SK-N-SH (cell line): ENCODE measurements at regions of chr17 and their contacts with region 1.

Region 1: DNA sequence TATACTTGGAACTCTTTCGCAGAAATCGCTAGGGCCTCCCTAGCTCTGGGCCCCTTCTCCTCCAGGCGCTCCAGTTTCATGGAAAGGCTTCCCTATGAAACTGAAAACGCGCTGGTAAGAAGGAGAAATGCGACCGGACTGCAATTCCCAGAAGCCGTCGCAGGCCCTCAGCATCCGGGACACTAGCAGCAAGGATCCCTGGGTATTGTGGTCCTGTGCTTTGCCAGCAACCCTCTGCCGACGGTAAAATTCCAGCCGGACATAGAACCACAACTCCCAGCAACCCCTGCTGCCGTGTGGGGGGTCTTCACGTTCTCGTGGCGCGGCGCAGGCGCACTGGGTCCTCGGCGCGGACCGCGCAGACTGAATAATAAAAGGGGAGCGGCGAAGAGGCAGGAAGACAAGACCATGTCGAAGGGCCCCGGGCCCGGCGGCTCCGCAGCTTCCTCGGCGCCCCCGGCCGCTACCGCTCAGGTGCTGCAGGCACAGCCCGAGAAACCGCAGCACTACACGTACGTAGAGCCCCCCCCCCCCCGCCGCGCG is at the start of gene UNK:
- DNase-seq: peak; percentile 99
- H3K4me3 ChIP-seq: peak within 1 kb of the TSS; percentile 65 to 72
- H3K27ac ChIP-seq: peak within 1 kb of the TSS; percentile 98
- H3K4me1 ChIP-seq: peaks cover 16 to 20% of the 10 kb centered on the region in 2 experiments
- H3K27me3 ChIP-seq: no peaks in the 10 kb centered on the region
- CTCF ChIP-seq: no peak
- EP300 ChIP-seq: no peak
- RAD21 ChIP-seq: no peak
- polyA plus RNA-seq, gene UNK: 19.9 and 24.8 TPM in 2 replicates

Region 2: GRCh38 chr17:75799398-75799797 is 14.9 kb after region 1 on chr17:
- CTCF ChIA-PET with region 1: interaction called, 19 read pairs
- POLR2A ChIA-PET with region 1: interaction called, 11 read pairs
- DNase-seq: no peak
- H3K4me3 ChIP-seq: no peak overlapping the region
- H3K27ac ChIP-seq: no peak overlapping the region
- H3K4me1 ChIP-seq: no peaks in the 10 kb centered on the region
- H3K27me3 ChIP-seq: no peaks in the 10 kb centered on the region
- CTCF ChIP-seq: no peak
- EP300 ChIP-seq: no peak
- RAD21 ChIP-seq: no peak

Region 3: GRCh38 chr17:75822119-75822799 is 37.7 kb after region 1 on chr17:
- CTCF ChIA-PET with region 1: interaction called, 120 read pairs
- POLR2A ChIA-PET with region 1: interaction called, 31 read pairs
- DNase-seq: peak; percentile 71
- H3K4me3 ChIP-seq: no peak overlapping the region
- H3K27ac ChIP-seq: peak overlapping the region in 1 of 2 experiments; percentile 57; a peak in 1 of 4 replicates
- H3K4me1 ChIP-seq: peaks cover 0 to 32% of the 10 kb centered on the region in 2 experiments; a peak in 1 of 4 replicates
- H3K27me3 ChIP-seq: no peaks in the 10 kb centered on the region
- CTCF ChIP-seq: no peak
- EP300 ChIP-seq: no peak
- RAD21 ChIP-seq: no peak

Region 4: DNA sequence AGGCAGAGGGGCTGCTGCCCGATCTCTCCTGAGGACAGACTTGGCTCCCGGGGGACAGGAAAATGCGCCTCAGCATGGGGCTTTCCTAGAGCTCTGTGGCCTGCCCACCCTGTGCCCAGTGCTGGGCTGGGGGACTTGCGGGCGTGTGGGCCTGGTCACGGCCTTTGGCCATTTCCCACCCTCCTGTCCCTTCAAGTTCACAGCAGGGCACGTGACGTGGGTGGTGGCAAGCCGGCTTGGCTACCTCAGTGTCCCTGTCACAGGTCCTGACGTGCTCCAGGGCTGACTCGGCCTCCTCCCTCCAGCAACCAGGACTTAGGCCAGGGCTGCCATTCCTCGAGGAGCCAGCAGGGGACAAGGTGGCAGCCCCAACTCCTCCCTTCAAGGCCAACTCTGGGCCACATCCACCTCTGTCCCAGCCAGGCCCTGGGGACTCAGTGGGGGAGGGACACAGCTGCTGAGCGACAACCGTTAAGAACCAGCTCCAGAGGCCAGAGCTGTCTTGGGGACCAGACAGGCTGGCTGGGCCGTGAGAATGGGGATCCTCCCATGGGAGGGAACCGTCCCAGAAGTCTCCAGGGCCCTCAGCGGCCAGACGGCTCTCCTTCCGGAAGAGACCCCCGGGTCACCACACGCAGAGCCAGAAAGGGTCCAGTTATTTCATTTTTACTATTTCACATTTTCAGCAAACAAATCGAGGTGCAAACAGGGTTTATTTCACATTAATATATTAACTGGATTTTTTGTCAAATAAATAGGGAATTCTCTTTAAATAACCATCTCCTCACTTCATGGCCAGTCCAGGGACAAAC is 60.7 kb after region 1 on chr17:
- CTCF ChIA-PET with region 1: interaction called, 8 read pairs
- POLR2A ChIA-PET with region 1: interaction called, 38 read pairs
- DNase-seq: peak; percentile 93
- H3K4me3 ChIP-seq: no peak overlapping the region
- H3K27ac ChIP-seq: peak overlapping the region in 1 of 2 experiments; percentile 93; a peak in 2 of 4 replicates
- H3K4me1 ChIP-seq: peaks cover 4 to 34% of the 10 kb centered on the region in 2 experiments; a peak in 3 of 4 replicates
- H3K27me3 ChIP-seq: no peaks in the 10 kb centered on the region
- CTCF ChIP-seq: peak; percentile 70
- EP300 ChIP-seq: peak in 1 of 2 experiments; percentile 55; a peak in 1 of 4 replicates
- RAD21 ChIP-seq: peak; percentile 44

Region 5: DNA sequence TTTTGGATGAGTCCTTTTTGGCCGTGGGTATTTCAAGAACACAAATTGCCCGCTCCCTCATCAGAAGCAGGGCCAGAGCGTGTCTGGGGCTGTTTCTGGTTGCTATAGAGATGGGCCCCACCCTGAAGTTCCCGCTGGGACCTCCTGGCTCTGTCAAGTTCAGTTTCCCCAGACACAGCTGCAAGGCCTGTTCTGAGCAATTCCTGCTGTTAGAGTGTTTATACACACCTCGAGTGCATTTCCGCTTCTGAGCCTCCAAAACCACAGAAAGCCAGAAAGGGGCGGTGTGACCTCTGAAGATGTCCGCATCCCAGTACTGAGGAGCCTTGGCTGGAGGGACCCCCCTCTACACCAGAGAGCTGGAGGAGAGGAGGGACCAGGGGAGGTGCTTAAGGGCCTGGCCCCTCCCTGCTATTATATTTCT is 79.9 kb after region 1 on chr17:
- CTCF ChIA-PET with region 1: interaction called, 11 read pairs
- POLR2A ChIA-PET with region 1: no interaction called
- DNase-seq: peak; percentile 35
- H3K4me3 ChIP-seq: no peak overlapping the region
- H3K27ac ChIP-seq: no peak overlapping the region
- H3K4me1 ChIP-seq: no peaks in the 10 kb centered on the region; a peak in 1 of 4 replicates
- H3K27me3 ChIP-seq: no peaks in the 10 kb centered on the region
- CTCF ChIP-seq: no peak
- EP300 ChIP-seq: no peak
- RAD21 ChIP-seq: no peak